K562 (cell line): ENCODE measurements at regions of chr9 and their contacts with region 1.

Region 1: DNA sequence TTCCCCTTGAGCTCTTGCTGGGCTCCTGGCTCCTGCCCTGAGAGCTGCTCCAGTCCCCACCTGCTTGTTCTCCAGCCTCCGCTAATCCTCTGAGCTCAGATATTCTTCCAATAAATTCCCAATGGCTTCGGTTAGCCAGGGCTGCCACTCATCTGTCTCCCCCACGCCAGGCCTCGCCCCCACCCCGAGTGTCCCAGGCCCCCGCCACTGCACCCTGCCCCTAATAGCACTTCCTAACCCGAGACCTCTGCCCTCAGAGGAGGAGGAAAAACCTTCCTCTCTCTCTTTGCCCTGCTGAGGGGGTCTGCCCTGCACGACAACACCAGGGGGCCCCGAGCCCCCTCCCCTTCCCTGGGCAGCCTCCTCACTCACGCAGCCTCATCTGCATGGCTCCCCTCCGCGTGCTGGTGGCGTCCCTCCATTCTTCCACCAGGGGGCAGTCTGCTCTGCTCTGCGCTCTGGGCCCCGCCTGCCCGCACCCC is 5.4 kb upstream of the LCN15 start:
- DNase-seq: peak; percentile 67 to 78 (median 72)
- ATAC-seq: peak; percentile 93
- H3K4me3 ChIP-seq: no peak overlapping the region
- H3K27ac ChIP-seq: no peak overlapping the region
- H3K4me1 ChIP-seq: peaks cover 10 to 20% of the 10 kb centered on the region in 2 experiments; a peak in 4 of 5 replicates
- H3K27me3 ChIP-seq: peaks cover 0 to 5% of the 10 kb centered on the region in 2 experiments; a peak in 1 of 5 replicates
- CTCF ChIP-seq: peak; percentile 61 to 80 (median 69)
- EP300 ChIP-seq: no peak
- POLR2A ChIP-seq: no peak
- RAD21 ChIP-seq: peak in 1 of 2 experiments; percentile 31; a peak in 1 of 4 replicates

Region 2: GRCh38 chr9:136784249-136784996 is 14.7 kb after region 1 on chr9:
- CTCF ChIA-PET with region 1: interaction called, 8 read pairs
- POLR2A ChIA-PET with region 1: interaction called, 3 read pairs
- in situ Hi-C with region 1: no loop called
- intact Hi-C with region 1: loop called (anchors 1 kb)
- DNase-seq: peak; percentile 53 to 80 (median 60)
- ATAC-seq: peak; percentile 62
- H3K4me3 ChIP-seq: no peak overlapping the region
- H3K27ac ChIP-seq: peak overlapping the region; percentile 72
- H3K4me1 ChIP-seq: peaks cover 40 to 42% of the 10 kb centered on the region in 2 experiments
- H3K27me3 ChIP-seq: no peaks in the 10 kb centered on the region
- CTCF ChIP-seq: peak; percentile 50 to 62 (median 54)
- EP300 ChIP-seq: no peak
- POLR2A ChIP-seq: no peak
- RAD21 ChIP-seq: peak; percentile 63 to 73

Region 3: GRCh38 chr9:136910901-136911245 is 141.1 kb after region 1 on chr9:
- CTCF ChIA-PET with region 1: no interaction called
- POLR2A ChIA-PET with region 1: no interaction called
- in situ Hi-C with region 1: no loop called
- intact Hi-C with region 1: no loop called
- DNase-seq: no peak
- ATAC-seq: peak; percentile 58; the same call in 2 of the 3 replicates
- H3K4me3 ChIP-seq: no peak overlapping the region
- H3K27ac ChIP-seq: no peak overlapping the region
- H3K4me1 ChIP-seq: peaks cover 0 to 12% of the 10 kb centered on the region in 2 experiments; a peak in 1 of 5 replicates
- H3K27me3 ChIP-seq: no peaks in the 10 kb centered on the region
- CTCF ChIP-seq: peak in 1 of 3 experiments; percentile 4; a peak in 1 of 6 replicates
- EP300 ChIP-seq: no peak
- POLR2A ChIP-seq: no peak
- RAD21 ChIP-seq: no peak

Region 4: GRCh38 chr9:136981588-136982231 is 212.0 kb after region 1 on chr9:
- CTCF ChIA-PET with region 1: no interaction called
- POLR2A ChIA-PET with region 1: no interaction called
- in situ Hi-C with region 1: no loop called
- intact Hi-C with region 1: no loop called
- DNase-seq: no peak
- ATAC-seq: no peak
- H3K4me3 ChIP-seq: no peak overlapping the region
- H3K27ac ChIP-seq: no peak overlapping the region
- H3K4me1 ChIP-seq: peaks cover 9 to 86% of the 10 kb centered on the region in 2 experiments; a peak in 4 of 5 replicates
- H3K27me3 ChIP-seq: no peaks in the 10 kb centered on the region
- CTCF ChIP-seq: no peak
- EP300 ChIP-seq: no peak
- POLR2A ChIP-seq: no peak
- RAD21 ChIP-seq: no peak